H1 (cell line): ENCODE measurements at regions of chr17 and their contacts with region 1.

Region 1: GRCh38 chr17:16438557-16439302 is 23.4 kb downstream of the TRPV2 start:
- DNase-seq: peak; percentile 91 to 99
- H3K4me3 ChIP-seq: peak overlapping the region; percentile 93 to 98 (median 96)
- H3K27ac ChIP-seq: peak overlapping the region; percentile 93
- H3K4me1 ChIP-seq: peaks cover 4 to 23% (median 13%) of the 10 kb centered on the region in 4 experiments
- H3K27me3 ChIP-seq: no peaks in the 10 kb centered on the region
- CTCF ChIP-seq: no peak
- EP300 ChIP-seq: peak in 1 of 2 experiments; percentile 99; a peak in 2 of 3 replicates
- POLR2A ChIP-seq: peak; percentile 94 to 99
- RAD21 ChIP-seq: peak in 1 of 2 experiments; percentile 8; a peak in 1 of 4 replicates

Region 2: DNA sequence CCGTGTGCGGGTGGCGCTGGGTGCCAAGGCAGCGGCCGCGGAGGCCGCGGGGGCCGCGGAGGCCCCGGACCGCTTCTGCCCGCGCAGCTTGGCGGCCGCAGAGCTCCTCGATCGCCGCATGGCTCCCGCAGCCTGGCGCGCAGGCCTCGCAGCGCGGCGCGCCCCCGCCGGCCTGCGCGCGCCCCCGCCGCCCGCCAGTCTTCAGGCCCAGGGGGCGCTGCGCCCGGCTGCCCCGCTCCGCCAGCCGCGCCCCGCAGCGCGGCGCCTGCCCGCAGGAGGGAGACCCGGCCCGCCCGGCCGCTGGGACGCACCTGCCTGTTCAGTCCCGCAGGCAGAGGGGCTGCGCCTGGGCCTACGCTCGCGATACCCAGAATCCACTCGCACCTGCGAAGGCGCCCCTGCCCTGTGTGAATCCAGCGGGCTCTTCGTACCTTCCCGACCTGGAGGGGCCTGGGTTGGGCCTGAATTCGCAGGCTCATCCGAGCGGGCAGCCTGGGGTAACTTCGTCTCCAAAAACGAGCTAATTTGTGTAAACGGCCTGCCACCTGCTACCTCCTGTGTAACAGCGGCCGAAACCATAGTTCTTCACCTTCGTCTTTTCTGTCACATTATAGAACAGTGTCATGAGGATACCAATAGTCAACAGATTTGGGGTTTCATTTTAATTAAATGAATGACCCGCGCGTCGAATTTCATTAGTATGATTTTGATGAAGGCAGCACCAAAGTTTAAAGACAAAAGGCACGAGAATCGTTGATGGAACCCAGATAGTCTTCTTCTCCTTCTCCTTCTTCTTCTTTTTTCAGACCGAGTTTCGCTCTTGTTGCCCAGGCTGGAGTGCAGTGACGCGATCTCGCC is 85.2 kb before region 1 on chr17 and contains the start of gene CENPV:
- CTCF ChIA-PET with region 1: no interaction called
- POLR2A ChIA-PET with region 1: interaction called, 23 read pairs
- DNase-seq: peak; percentile 54 to 88
- H3K4me3 ChIP-seq: peak within 1 kb of the TSS; percentile 78 to 95 (median 86)
- H3K27ac ChIP-seq: peak within 1 kb of the TSS; percentile 55
- H3K4me1 ChIP-seq: 0 out of 7 replicates have a peak, but pooled peaks cover 0 to 2% (median 0%) of the 10 kb centered on the region in 4 experiments
- H3K27me3 ChIP-seq: no peaks in the 10 kb centered on the region; a peak in 1 of 7 replicates
- CTCF ChIP-seq: peak; percentile 13 to 32 (median 14); a peak in 3 of 4 replicates
- EP300 ChIP-seq: no peak
- POLR2A ChIP-seq: peak; percentile 54 to 56; a peak in 2 of 3 replicates
- RAD21 ChIP-seq: no peak
- total RNA-seq, gene CENPV: 249 and 255 TPM in 2 replicates

Region 3: DNA sequence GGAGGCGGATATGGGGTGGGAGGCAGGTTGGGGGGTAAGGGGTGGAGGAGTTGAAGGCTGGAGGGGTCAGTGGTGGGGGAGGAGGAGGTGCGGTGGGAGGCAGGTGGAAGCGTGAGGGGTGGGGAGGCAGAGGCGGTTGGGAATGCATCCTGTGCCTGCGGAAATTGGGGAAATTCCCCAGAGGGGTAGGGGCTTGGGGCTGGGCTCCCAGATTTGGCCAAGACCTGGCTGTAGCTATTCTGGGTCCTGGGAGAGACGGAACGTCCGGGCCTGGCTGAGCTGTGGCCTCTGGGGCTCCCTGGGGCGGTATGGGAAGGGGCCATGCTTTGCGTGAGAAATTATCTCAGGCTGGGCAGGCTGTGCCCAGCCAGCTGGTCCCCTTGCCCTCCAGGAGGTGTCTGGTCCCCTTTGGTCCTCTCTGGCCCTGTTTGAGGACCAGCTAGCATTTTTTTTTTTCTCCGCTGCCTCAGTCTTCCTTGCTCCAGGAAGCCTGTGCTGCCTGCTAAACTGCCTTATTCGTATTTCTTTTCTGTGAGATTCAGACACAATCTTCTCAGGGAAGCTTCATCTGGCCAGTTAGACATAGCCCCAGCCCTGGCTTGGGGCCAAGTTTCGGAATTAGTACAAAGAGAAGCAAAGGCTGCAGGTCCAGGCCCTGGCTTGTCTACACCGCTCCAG is 30.7 kb before region 1 on chr17:
- CTCF ChIA-PET with region 1: interaction called, 4 read pairs
- POLR2A ChIA-PET with region 1: interaction called, 78 read pairs
- DNase-seq: peak in 1 of 2 experiments; percentile 69
- H3K4me3 ChIP-seq: peak overlapping the region in 2 of 4 experiments; percentile 23 to 52; a peak in 4 of 8 replicates
- H3K27ac ChIP-seq: peak overlapping the region; percentile 68
- H3K4me1 ChIP-seq: peaks cover 4 to 7% (median 4%) of the 10 kb centered on the region in 4 experiments; a peak in 4 of 7 replicates
- H3K27me3 ChIP-seq: no peaks in the 10 kb centered on the region
- CTCF ChIP-seq: no peak
- EP300 ChIP-seq: no peak
- POLR2A ChIP-seq: no peak
- RAD21 ChIP-seq: no peak

Region 4: GRCh38 chr17:16428098-16428882 is 10.4 kb before region 1 on chr17:
- CTCF ChIA-PET with region 1: interaction called, 16 read pairs
- POLR2A ChIA-PET with region 1: interaction called, 75 read pairs
- DNase-seq: peak in 1 of 2 experiments; percentile 44
- H3K4me3 ChIP-seq: no peak overlapping the region
- H3K27ac ChIP-seq: no peak overlapping the region
- H3K4me1 ChIP-seq: no peaks in the 10 kb centered on the region
- H3K27me3 ChIP-seq: no peaks in the 10 kb centered on the region; a peak in 1 of 7 replicates
- CTCF ChIP-seq: peak; percentile 62 to 82 (median 81)
- EP300 ChIP-seq: no peak
- POLR2A ChIP-seq: no peak
- RAD21 ChIP-seq: peak; percentile 40 to 52

Region 5: GRCh38 chr17:16463358-16464302 is 24.9 kb after region 1 on chr17:
- CTCF ChIA-PET with region 1: interaction called, 3 read pairs
- POLR2A ChIA-PET with region 1: interaction called, 204 read pairs
- DNase-seq: no peak
- H3K4me3 ChIP-seq: no peak overlapping the region
- H3K27ac ChIP-seq: no peak overlapping the region
- H3K4me1 ChIP-seq: peaks cover 6 to 26% (median 10%) of the 10 kb centered on the region in 4 experiments
- H3K27me3 ChIP-seq: no peaks in the 10 kb centered on the region
- CTCF ChIP-seq: peak; percentile 40 to 60 (median 43); a peak in 3 of 4 replicates
- EP300 ChIP-seq: no peak
- POLR2A ChIP-seq: no peak
- RAD21 ChIP-seq: peak; percentile 24 to 52; a peak in 2 of 4 replicates

Region 6: DNA sequence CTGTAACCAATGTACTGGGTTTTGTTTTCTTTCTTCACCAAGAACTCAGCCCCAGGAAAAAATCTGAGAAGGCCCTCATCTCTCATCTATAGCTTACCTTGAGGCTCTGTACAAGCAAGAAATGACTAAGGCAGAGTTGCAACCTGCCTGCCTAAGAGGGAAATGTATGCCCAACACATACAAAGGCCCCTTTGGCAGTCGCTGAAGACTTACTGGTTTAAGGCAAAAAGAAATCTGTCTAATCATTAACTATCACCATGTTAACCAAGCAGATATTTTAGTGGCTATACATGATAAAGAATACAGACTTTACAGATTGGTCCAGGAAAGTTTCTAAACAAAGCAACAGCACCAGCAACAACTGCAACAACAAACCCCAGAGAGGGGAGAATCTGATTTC is 200.7 kb after region 1 on chr17:
- CTCF ChIA-PET with region 1: no interaction called
- POLR2A ChIA-PET with region 1: no interaction called
- DNase-seq: no peak
- H3K4me3 ChIP-seq: no peak overlapping the region
- H3K27ac ChIP-seq: no peak overlapping the region
- H3K4me1 ChIP-seq: no peaks in the 10 kb centered on the region
- H3K27me3 ChIP-seq: no peaks in the 10 kb centered on the region
- CTCF ChIP-seq: no peak
- EP300 ChIP-seq: no peak
- POLR2A ChIP-seq: no peak
- RAD21 ChIP-seq: no peak